Common myeloid progenitor, CD34-positive (primary cell): ENCODE measurements at regions of chr5 and their contacts with region 1.

Region 1: DNA sequence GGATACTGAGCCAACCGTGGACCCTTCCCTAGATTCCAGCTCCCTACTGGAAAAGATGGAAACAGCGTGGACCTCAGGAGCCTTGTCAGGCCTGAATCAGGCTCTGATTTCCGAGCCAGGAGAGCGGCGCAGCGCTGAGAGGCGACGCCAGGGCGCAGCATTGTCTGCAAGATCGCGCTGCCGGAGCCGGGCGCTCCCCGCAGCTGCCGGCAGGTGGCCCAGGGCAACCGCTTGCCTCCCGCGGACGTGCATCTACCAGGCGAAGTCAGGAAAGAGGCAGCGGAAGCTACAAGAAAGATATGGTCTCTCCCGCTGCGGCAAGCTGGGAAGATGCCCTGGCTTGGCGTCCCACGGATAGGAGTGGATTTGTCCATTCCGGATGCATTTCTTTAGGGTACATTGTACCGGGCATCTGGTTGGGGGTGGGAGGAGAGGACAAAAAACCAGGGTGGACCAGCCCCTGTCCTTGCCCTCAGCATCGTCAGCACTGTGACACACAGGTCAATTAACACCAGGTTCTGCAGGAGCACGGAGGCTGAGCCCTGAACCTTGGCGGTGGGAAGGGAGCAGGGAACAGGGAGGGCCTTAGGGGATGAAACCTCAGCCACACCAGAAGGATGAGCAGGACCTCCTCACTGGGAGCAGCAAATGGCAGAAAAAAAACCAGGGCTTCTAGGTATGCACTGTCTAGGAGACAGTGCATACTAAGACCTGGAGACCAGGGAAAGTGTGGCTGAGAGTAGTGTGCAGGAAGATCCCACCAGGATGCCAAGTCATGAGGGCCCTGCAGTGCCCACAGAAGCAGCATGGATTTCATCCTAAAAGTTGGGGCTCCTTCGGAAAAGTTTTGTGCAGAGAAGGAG is 55.9 kb downstream of the SFXN1 start:
- DNase-seq: peak; percentile 77 to 85 (median 81)
- H3K4me3 ChIP-seq: peak overlapping the region in 1 of 7 experiments; percentile 20
- H3K27ac ChIP-seq: no peak overlapping the region
- H3K4me1 ChIP-seq: peaks cover 0 to 5% (median 4%) of the 10 kb centered on the region in 4 experiments
- H3K27me3 ChIP-seq: peaks cover 0 to 4% (median 0%) of the 10 kb centered on the region in 5 experiments

Region 2: GRCh38 chr5:175548626-175549311 is 14.5 kb after region 1 on chr5:
- CTCF ChIA-PET with region 1: interaction called, 11 read pairs
- POLR2A ChIA-PET with region 1: no interaction called
- DNase-seq: no peak
- H3K4me3 ChIP-seq: no peak overlapping the region
- H3K27ac ChIP-seq: no peak overlapping the region
- H3K4me1 ChIP-seq: peaks cover 5 to 39% (median 8%) of the 10 kb centered on the region in 4 experiments
- H3K27me3 ChIP-seq: peaks cover 0 to 5% (median 3%) of the 10 kb centered on the region in 5 experiments

Region 3: DNA sequence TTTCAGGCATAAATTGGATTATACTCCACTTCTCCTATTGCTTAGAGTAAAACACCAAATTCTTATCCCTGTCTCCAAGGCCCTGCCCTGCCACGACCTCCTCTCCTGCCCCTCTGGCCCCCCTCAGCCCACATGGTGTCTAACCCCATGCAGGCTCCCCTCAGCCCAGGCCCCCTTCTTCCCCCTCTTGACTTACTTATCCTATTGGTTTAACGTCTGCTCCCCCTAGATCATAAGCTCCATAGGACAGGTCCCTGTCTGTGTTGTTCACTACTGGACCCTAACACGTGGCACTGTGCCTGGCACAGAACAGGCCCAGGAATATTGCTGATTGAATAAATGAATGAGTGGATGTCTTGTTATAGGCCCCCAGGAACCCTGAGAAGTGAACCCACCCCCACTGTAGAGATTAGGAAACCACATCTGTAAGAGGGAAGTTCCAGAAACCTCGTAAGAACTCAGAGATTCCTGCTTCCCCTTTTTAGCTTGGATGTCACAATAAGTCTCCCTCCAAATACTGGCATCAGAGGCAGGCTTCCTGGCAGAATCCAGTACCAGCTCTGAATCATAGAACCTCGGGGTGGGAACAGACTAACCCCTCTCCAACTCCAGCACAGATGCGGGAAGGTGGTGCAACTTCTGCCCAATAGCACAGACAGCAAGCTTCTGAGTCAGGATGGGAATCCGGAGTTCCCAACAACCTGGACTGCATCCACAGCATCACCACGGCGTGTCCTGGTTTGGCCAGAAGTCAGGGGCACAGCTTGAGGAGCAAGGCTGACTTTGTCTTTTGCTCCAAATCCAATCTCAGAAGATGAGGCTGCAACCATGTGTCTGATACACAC is 155.1 kb after region 1 on chr5:
- CTCF ChIA-PET with region 1: interaction called, 36 read pairs
- POLR2A ChIA-PET with region 1: interaction called, 3 read pairs
- DNase-seq: peak; percentile 54 to 86 (median 85)
- H3K4me3 ChIP-seq: peak overlapping the region in 1 of 7 experiments; percentile 6
- H3K27ac ChIP-seq: no peak overlapping the region
- H3K4me1 ChIP-seq: peaks cover 9 to 61% (median 31%) of the 10 kb centered on the region in 4 experiments
- H3K27me3 ChIP-seq: peaks cover 0 to 21% (median 0%) of the 10 kb centered on the region in 5 experiments

Region 4: DNA sequence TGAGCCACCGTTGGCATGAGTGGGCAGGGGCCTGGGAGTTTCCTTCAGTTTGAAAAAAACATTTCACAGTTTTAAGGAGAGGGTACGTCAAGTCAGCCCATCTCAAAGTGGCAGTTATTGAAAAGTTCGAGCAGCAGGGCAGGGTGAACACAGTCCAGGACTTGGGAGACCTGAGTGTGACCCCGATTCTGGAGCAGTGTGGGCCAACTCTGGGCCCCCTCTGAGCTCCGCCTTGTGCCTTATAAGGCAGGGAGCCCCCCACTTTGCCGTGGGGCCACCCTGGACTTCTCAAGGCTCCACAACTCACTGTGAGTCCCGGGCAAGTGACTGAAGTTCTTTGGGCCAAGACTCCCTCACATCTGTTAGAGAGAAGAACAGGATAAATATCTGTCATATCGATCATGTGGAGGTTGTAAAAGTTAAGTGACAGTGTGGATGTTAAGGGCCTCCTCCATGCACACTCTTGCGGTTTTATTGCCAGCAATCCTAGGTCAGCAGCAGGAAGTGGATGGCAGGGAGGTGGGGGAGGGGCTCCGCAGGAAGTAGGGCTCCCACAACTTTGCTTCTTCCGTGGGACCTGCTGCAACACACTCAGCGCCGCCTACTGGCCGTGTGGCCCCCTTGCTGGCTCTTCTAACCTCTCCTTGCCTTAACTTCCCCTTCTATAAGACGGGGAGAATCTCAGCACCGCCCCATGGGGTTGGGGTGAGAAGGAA is 162.0 kb after region 1 on chr5:
- CTCF ChIA-PET with region 1: interaction called, 36 read pairs
- POLR2A ChIA-PET with region 1: interaction called, 3 read pairs
- DNase-seq: peak; percentile 78 to 85 (median 84)
- H3K4me3 ChIP-seq: peak overlapping the region in 2 of 7 experiments; percentile 12 to 19
- H3K27ac ChIP-seq: no peak overlapping the region
- H3K4me1 ChIP-seq: peaks cover 0 to 55% (median 39%) of the 10 kb centered on the region in 4 experiments
- H3K27me3 ChIP-seq: no peaks in the 10 kb centered on the region

Region 5: DNA sequence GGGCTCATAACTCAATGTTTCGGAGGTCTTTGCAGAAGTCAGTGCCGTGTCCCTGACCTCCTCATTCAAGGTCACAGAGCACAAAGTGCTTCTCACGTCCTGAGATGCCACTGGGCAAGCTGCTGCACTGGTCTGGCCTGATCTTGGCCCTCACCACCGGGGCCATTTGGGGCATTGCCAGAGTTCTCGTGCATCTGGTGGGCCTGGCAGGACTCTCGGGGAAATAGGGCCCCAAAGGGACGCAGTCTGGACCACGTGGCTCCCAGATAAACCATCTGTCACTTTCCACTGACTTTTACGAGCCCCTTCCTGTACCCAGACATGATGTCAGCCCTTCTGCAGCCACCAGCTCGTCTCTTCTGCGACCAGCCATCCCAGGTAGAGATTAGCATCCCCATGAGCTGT is 178.4 kb after region 1 on chr5:
- CTCF ChIA-PET with region 1: interaction called, 81 read pairs
- POLR2A ChIA-PET with region 1: no interaction called
- DNase-seq: no peak
- H3K4me3 ChIP-seq: no peak overlapping the region
- H3K27ac ChIP-seq: no peak overlapping the region
- H3K4me1 ChIP-seq: no peaks in the 10 kb centered on the region
- H3K27me3 ChIP-seq: peaks cover 0 to 4% (median 0%) of the 10 kb centered on the region in 5 experiments

Region 6: GRCh38 chr5:175718401-175719108 is 184.3 kb after region 1 on chr5:
- CTCF ChIA-PET with region 1: interaction called, 81 read pairs
- POLR2A ChIA-PET with region 1: no interaction called
- DNase-seq: peak; percentile 51 to 82 (median 72)
- H3K4me3 ChIP-seq: no peak overlapping the region
- H3K27ac ChIP-seq: no peak overlapping the region
- H3K4me1 ChIP-seq: no peaks in the 10 kb centered on the region
- H3K27me3 ChIP-seq: peaks cover 0 to 4% (median 0%) of the 10 kb centered on the region in 5 experiments

Region 7: GRCh38 chr5:175729829-175730277 is 195.6 kb after region 1 on chr5:
- CTCF ChIA-PET with region 1: interaction called, 47 read pairs
- POLR2A ChIA-PET with region 1: no interaction called
- DNase-seq: peak; percentile 86 to 90 (median 87)
- H3K4me3 ChIP-seq: peak overlapping the region in 2 of 7 experiments; percentile 16 to 28
- H3K27ac ChIP-seq: no peak overlapping the region
- H3K4me1 ChIP-seq: peaks cover 0 to 7% (median 5%) of the 10 kb centered on the region in 4 experiments
- H3K27me3 ChIP-seq: peaks cover 2 to 24% (median 9%) of the 10 kb centered on the region in 5 experiments